H1 (cell line): ENCODE measurements at regions of chr10 and their contacts with region 1.

Region 1: DNA sequence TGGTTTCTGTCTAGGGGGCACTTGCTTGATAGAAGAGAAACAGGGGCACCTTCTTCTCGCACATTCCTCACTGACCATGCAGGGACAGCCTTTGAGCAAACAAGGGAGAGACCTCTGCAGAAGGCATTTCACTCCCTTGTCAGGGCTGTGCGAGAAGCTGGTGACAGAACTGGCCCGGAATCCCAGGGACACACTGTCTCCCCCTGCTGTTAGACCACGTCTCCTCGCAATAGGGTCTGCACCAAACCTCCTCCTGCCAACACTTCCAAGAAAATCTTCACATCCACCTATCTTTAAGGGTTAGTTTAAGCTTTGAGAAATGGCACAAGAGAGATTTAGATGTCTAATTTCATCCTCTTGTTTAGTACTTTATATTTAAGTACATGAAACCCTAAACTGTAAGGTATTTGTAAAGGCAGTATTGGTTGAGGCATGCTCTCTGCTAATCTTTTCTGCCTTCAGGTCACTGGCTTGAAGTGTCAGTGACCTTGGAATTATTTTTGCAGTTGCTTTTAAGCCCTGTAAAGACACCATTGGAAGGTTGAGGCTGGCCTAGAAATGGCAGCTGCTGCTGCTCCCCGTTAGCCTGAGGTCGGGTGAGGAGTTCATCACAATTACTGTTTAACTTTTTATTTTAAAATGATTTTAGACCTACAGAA is 37.0 kb downstream of the RBM20 start:
- DNase-seq: peak in 1 of 2 experiments; percentile 69
- H3K4me3 ChIP-seq: no peak overlapping the region
- H3K27ac ChIP-seq: no peak overlapping the region
- H3K4me1 ChIP-seq: peaks cover 2 to 10% (median 6%) of the 10 kb centered on the region in 4 experiments; a peak in 5 of 7 replicates
- H3K27me3 ChIP-seq: no peaks in the 10 kb centered on the region
- CTCF ChIP-seq: peak; percentile 69 to 87 (median 86)
- EP300 ChIP-seq: no peak
- POLR2A ChIP-seq: no peak
- RAD21 ChIP-seq: peak; percentile 66 to 69

Region 2: GRCh38 chr10:110664483-110665420 is 16.4 kb before region 1 on chr10:
- CTCF ChIA-PET with region 1: interaction called, 64 read pairs
- POLR2A ChIA-PET with region 1: no interaction called
- DNase-seq: no peak
- H3K4me3 ChIP-seq: no peak overlapping the region
- H3K27ac ChIP-seq: no peak overlapping the region
- H3K4me1 ChIP-seq: peaks cover 7 to 22% (median 14%) of the 10 kb centered on the region in 4 experiments; a peak in 6 of 7 replicates
- H3K27me3 ChIP-seq: peaks cover 3 to 30% (median 21%) of the 10 kb centered on the region in 4 experiments
- CTCF ChIP-seq: no peak
- EP300 ChIP-seq: no peak
- POLR2A ChIP-seq: no peak
- RAD21 ChIP-seq: no peak

Region 3: DNA sequence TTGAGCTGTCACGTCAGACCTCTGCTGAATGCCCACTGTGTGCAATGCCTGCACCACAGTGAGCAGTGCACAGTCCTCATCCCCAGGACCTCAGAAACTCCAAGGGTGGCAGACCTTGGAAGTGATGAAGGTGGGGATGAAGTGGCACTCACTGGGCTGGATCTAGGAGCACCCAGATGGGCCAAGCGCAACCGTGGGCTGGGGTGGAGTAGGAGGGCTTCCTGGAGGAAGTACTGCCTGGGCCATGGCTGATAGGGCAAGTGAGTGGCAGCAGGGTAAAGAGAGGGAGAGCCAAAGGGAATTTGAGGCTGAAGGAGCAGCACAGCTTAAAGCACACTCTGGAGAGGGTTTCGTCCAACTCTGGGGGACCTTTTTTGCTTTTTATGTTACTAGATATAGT is 15.3 kb after region 1 on chr10:
- CTCF ChIA-PET with region 1: interaction called, 11 read pairs
- POLR2A ChIA-PET with region 1: no interaction called
- DNase-seq: no peak
- H3K4me3 ChIP-seq: no peak overlapping the region
- H3K27ac ChIP-seq: no peak overlapping the region
- H3K4me1 ChIP-seq: no peaks in the 10 kb centered on the region; a peak in 1 of 7 replicates
- H3K27me3 ChIP-seq: no peaks in the 10 kb centered on the region
- CTCF ChIP-seq: no peak
- EP300 ChIP-seq: no peak
- POLR2A ChIP-seq: no peak
- RAD21 ChIP-seq: no peak

Region 4: GRCh38 chr10:110706690-110707098 is 25.5 kb after region 1 on chr10:
- CTCF ChIA-PET with region 1: interaction called, 18 read pairs
- POLR2A ChIA-PET with region 1: no interaction called
- DNase-seq: peak; percentile 27 to 30
- H3K4me3 ChIP-seq: no peak overlapping the region
- H3K27ac ChIP-seq: no peak overlapping the region
- H3K4me1 ChIP-seq: peaks cover 0 to 4% (median 2%) of the 10 kb centered on the region in 4 experiments; a peak in 5 of 7 replicates
- H3K27me3 ChIP-seq: no peaks in the 10 kb centered on the region
- CTCF ChIP-seq: no peak
- EP300 ChIP-seq: no peak
- POLR2A ChIP-seq: no peak
- RAD21 ChIP-seq: no peak